Activated naive CD4-positive, alpha-beta T cell treated with anti-CD3 and anti-CD28 coated beads, Interleukin-2, amount 10 ng/mL, durations not matched to agents 7 days and 5 days (primary cell): ENCODE measurements at regions of chr14 and their contacts with region 1.

Region 1: GRCh38 chr14:21748869-21749303 is 75.3 kb upstream of the OR4E1 start:
- DNase-seq: peak; percentile 71
- H3K4me3 Mint-ChIP-seq: peak overlapping the region; percentile 45
- H3K27ac Mint-ChIP-seq: peak overlapping the region; percentile 85
- H3K4me1 Mint-ChIP-seq: peaks cover 7% of the 10 kb centered on the region
- H3K27me3 Mint-ChIP-seq: peaks cover 13% of the 10 kb centered on the region

Region 2: GRCh38 chr14:21723431-21724045 is 25.3 kb before region 1 on chr14:
- CTCF ChIA-PET with region 1: interaction called, 12 read pairs
- DNase-seq: peak; percentile 69
- H3K4me3 Mint-ChIP-seq: peak overlapping the region; percentile 73
- H3K27ac Mint-ChIP-seq: peak overlapping the region; percentile 81
- H3K4me1 Mint-ChIP-seq: peaks cover 2% of the 10 kb centered on the region
- H3K27me3 Mint-ChIP-seq: peaks cover 17% of the 10 kb centered on the region

Region 3: GRCh38 chr14:21734457-21735074 is 14.3 kb before region 1 on chr14:
- CTCF ChIA-PET with region 1: interaction called, 11 read pairs
- DNase-seq: peak; percentile 56
- H3K4me3 Mint-ChIP-seq: peak overlapping the region; percentile 61
- H3K27ac Mint-ChIP-seq: no peak overlapping the region
- H3K4me1 Mint-ChIP-seq: peaks cover 16% of the 10 kb centered on the region
- H3K27me3 Mint-ChIP-seq: peaks cover 29% of the 10 kb centered on the region